ENCODE measurements at regions of chr12 and their contacts with region 1.

Region 1: GRCh38 chr12:79141776-79142175 is 277.2 kb downstream of the SYT1 start:
- DNase-seq: no peak

Region 2: DNA sequence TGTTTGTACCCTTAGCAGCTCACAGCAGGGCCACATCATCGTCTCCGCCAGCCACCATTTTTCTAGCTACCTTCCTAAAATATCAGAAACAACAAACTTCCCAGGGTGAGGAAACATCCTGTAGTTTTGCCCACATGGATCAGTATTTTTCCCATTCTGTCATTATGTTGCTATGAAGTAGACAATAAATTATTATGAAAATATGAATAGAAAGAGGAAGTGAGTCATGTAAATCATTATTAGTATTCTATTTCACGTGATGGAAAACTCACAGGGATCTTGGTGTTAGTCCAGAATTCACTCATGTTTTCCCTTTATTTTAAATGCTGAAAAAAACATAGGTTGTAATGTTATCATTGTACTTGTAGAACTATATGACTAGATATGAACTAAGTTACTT is 42.1 kb after region 1 on chr12:
- intact Hi-C with region 1: loop called in 1 of 2 experiments (anchors 2 kb)
- DNase-seq: no peak